ENCODE measurements at regions of chr5 and their contacts with region 1.

Region 1: GRCh38 chr5:126369967-126370731 is 53.1 kb upstream of the GRAMD2B start:
- DNase-seq: no peak
- H3K4me3 ChIP-seq: no peak overlapping the region
- H3K27ac ChIP-seq: peak overlapping the region in 3 of 4 donors; percentile 37 to 45 (median 38)
- H3K4me1 ChIP-seq: peaks cover 0 to 24% (median 21%) of the 10 kb centered on the region in 4 donors
- H3K27me3 ChIP-seq: no peaks in the 10 kb centered on the region
- CTCF ChIP-seq: peak in 1 of 4 experiments; percentile 36
- EP300 ChIP-seq: no peak
- POLR2A ChIP-seq: no peak

Region 2: GRCh38 chr5:126233256-126233655 is 136.9 kb before region 1 on chr5:
- intact Hi-C with region 1: no loop called
- DNase-seq: no peak
- H3K4me3 ChIP-seq: no peak overlapping the region
- H3K27ac ChIP-seq: no peak overlapping the region
- H3K4me1 ChIP-seq: no peaks in the 10 kb centered on the region
- H3K27me3 ChIP-seq: no peaks in the 10 kb centered on the region
- CTCF ChIP-seq: no peak
- EP300 ChIP-seq: no peak
- POLR2A ChIP-seq: no peak

Region 3: DNA sequence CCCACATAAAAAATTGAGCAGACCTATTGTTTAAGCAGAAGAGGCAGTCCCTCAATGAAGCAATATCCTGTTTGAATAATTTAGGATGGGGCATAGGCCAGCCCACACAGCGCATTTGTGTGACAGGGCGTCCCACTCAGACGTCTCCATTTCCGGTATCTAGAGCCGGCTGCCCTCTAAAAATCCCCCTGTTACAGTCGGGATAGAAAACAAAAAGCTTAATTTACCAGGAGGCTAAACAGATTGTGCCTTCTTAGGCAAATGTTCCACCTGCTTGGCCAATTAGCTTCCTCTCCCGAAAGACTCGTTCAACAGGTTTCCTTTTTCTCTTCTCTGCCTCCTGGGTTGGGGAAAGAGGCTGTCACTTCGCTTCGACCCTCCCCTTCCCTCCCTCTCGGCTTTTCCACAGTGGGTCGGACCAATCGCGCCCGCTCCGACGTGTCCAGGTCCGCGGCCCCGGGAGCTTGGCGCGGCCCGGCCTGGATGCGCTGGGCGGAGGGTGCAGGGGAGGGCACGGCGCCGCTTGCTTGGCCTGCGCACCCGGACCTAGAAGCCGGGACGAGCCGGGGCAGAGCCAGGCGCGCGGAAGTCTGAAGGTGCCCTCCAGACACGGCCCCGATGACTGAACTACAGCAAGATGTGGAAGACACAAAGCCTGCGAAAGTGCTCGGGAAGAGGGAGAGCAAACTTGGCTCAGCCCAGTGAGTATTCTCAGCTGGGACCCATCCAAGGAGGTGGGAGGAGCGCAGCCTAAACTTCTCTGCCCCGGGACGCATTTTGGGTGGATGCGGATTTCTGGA is 53.0 kb after region 1 on chr5 and contains the start of gene GRAMD2B:
- intact Hi-C with region 1: loop called (anchors 5 kb)
- DNase-seq: peak; percentile 94
- H3K4me3 ChIP-seq: peak within 1 kb of the TSS; percentile 63 to 74 (median 68)
- H3K27ac ChIP-seq: peak within 1 kb of the TSS; percentile 90 to 94 (median 92)
- H3K4me1 ChIP-seq: peaks cover 2 to 31% (median 20%) of the 10 kb centered on the region in 4 donors
- H3K27me3 ChIP-seq: no peaks in the 10 kb centered on the region
- CTCF ChIP-seq: no peak
- EP300 ChIP-seq: no peak
- POLR2A ChIP-seq: peak; percentile 87 to 90
- total RNA-seq, gene GRAMD2B: 33.0 to 53.8 (median 46.5) TPM

Region 4: GRCh38 chr5:126641387-126641786 is 271.2 kb after region 1 on chr5:
- intact Hi-C with region 1: no loop called
- DNase-seq: no peak
- H3K4me3 ChIP-seq: no peak overlapping the region
- H3K27ac ChIP-seq: no peak overlapping the region
- H3K4me1 ChIP-seq: no peaks in the 10 kb centered on the region
- H3K27me3 ChIP-seq: no peaks in the 10 kb centered on the region
- CTCF ChIP-seq: no peak
- EP300 ChIP-seq: no peak
- POLR2A ChIP-seq: no peak

Measured in sigmoid colon (tissue), 7 donors.